Activated T-helper 2 cell treated with anti-CD3 and anti-CD28 coated beads, Interferon-gamma antibody, Interleukin-2, Interleukin-4, amounts not matched to agents 10 μg/mL and 5 μg/mL and 100 μg/mL, durations not matched to agents 14 hours and 24 hours and 36 hours (primary cell): ENCODE measurements at regions of chr2 and their contacts with region 1.

Region 1: DNA sequence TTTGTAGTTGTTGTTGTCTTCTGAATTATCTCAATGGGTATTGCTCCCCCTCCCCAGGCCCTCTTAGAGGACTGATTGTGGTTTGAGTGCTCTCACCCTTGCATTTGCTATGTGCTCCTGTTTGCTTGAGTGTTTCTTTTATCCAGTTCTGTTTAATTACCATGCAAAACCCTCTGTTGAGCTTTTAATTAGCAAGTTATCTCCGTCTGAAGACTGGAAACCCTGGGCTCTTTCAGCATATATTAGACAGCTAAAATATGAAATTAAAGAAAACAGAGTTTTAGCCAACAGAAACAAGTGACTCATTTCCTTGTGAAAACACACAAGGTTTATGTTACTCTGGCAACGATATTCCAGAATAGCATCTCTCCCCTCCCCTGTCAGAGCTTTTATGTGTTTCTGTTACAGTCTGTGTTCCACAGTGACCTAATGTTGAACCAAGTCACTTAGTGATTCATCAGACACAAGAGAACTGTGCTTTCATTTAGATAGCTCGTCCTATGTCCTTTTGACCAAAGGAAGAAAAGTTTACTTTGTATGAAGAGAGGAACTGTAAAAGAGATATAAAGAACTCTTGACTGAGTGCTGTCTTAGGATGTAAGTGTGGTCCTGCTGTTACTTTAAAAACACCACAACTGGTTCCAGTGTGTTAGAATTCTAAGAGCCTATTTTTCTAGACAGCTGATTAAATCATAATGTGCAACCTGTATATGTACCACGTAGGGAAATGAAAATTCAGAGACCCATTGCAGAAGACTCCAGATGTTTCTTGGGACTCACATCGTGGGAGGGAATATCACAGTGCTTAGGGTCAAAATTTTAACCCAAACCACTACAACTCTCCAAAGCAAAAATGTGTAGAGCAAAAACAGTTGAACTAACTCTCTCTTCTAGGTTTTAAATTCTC is 172.8 kb upstream of the RBMS1 start:
- DNase-seq: no peak
- H3K4me3 Mint-ChIP-seq: no peak overlapping the region
- H3K27ac Mint-ChIP-seq: no peak overlapping the region
- H3K4me1 Mint-ChIP-seq: peaks cover 20% of the 10 kb centered on the region
- H3K27me3 Mint-ChIP-seq: peaks cover 6% of the 10 kb centered on the region

Region 2: DNA sequence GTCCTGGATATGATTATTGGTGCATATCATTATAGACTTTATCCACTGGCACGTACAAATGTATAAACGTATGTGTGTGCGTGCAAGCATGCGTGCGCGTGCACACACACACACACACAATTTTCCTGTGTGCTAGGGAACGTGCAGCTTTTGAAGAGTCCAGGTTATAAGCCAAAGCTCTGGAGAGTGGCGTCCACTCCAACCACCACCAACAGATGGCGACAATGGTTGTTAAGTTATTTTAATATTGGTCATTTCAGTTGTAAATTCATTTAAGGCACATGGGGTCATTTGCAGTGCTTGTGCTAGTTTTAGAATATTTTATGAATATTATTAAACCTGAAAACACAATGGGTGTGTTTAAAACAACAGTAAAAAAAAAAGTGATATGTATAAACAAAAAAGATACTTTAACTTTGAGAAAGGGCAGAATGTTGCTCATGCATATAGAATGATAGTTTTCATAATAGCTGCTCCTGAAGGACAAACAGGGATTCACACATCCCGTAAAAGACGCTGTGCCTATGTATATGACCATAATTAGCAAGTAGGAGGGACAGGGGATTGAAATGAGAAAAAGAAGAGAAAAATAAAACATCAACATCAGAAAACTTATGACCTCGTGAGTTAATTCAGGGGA is 342.1 kb before region 1 on chr2:
- intact Hi-C with region 1: loop called (anchors 10 kb)
- DNase-seq: no peak
- H3K4me3 Mint-ChIP-seq: no peak overlapping the region
- H3K27ac Mint-ChIP-seq: no peak overlapping the region
- H3K4me1 Mint-ChIP-seq: peaks cover 45% of the 10 kb centered on the region
- H3K27me3 Mint-ChIP-seq: peaks cover 5% of the 10 kb centered on the region

Region 3: DNA sequence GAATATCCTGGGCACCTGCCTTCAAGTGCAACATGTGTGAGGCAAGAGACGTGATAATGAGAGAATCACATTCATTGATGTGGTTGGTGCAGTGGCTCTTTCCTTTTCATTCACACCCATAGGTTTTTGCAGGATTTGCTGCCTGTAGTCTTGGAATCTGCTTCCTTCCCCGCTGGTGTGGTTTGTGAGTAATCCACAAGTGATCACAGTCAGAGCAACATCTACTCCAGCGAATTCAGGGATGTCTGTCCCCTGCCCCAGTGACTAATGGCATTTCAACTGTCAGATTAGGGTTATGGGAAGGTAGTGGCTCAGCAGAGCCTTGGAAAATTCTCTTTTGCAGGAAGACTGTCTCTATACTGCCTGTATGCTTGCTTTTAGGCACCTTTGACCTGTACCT is 52.7 kb after region 1 on chr2:
- intact Hi-C with region 1: no loop called
- DNase-seq: no peak
- H3K4me3 Mint-ChIP-seq: no peak overlapping the region
- H3K27ac Mint-ChIP-seq: no peak overlapping the region
- H3K4me1 Mint-ChIP-seq: no peaks in the 10 kb centered on the region
- H3K27me3 Mint-ChIP-seq: peaks cover 11% of the 10 kb centered on the region

Region 4: GRCh38 chr2:160994141-160995002 is 328.0 kb after region 1 on chr2:
- intact Hi-C with region 1: no loop called
- DNase-seq: peak; percentile 55
- H3K4me3 Mint-ChIP-seq: no peak overlapping the region
- H3K27ac Mint-ChIP-seq: no peak overlapping the region
- H3K4me1 Mint-ChIP-seq: peaks cover 5% of the 10 kb centered on the region
- H3K27me3 Mint-ChIP-seq: peaks cover 6% of the 10 kb centered on the region